ENCODE measurements at regions of chr2 and their contacts with region 1.

Region 1: DNA sequence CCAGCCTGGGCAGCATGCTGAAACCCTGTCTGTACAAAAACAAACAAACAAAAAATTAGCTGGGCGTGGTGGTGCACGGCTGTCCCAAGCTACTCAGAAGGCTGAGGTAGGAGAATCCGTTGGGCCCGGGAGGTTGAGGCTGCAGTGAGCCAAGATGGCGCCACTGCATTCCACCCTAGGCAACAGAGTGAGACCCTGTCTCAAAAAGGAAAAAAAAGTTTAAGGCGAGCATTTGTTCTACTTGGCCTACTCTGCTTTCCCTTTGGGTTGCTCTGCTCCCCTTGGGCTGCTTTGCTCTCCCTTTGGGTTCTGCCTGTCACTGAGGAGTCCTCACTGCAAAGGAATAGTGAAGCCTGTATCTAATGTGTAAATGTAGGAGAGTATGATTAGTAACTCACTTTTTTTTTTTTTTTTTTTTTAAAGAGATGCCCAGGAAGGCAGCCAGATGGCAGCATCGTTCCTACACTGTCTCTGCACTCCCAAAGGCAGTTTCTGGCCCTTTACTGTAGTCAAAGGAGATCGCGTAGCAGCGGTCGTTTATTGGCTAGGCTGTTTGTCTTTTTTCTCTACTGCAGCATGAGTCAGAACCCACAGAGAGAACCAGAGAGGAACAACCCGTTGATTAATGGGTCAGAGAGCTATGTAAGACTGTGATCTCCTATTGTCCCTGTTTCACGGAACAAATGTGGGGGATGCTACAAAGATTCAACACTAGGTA is 118.3 kb upstream of the CWC22 start:
- DNase-seq: peak; percentile 67
- ATAC-seq: peak; percentile 94
- H3K4me3 ChIP-seq: peak overlapping the region in 1 of 2 experiments; percentile 23; a peak in 1 of 4 replicates
- H3K27ac ChIP-seq: peak overlapping the region; percentile 61; the same call in 1 of the 2 replicates
- H3K4me1 ChIP-seq: peaks cover 11% of the 10 kb centered on the region
- H3K27me3 ChIP-seq: no peaks in the 10 kb centered on the region
- CTCF ChIP-seq: peak; percentile 82

Region 2: DNA sequence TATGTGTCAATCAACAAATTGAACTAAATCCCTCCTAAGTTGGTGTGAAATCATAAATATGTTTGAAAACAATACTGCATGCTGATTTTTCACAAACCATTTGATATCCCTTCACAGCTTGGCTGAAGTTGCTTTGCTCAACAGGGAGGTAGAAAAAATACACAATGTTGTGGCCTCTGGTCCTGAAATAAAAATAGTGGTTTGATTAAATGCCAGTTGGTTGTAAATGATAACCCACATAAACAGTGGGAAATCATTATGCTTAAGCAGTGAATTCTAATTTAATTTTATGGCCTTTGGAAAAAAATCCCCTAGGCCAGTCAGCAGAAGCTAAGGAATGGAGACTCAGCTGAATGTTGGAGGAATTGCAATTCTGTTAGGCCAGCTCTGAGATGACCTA is 241.1 kb after region 1 on chr2:
- CTCF ChIA-PET with region 1: interaction called, 10 read pairs
- POLR2A ChIA-PET with region 1: no interaction called
- in situ Hi-C with region 1: no loop called
- intact Hi-C with region 1: no loop called
- DNase-seq: no peak
- ATAC-seq: no peak
- H3K4me3 ChIP-seq: no peak overlapping the region
- H3K27ac ChIP-seq: no peak overlapping the region
- H3K4me1 ChIP-seq: no peaks in the 10 kb centered on the region; the same call in 1 of the 2 replicates
- H3K27me3 ChIP-seq: no peaks in the 10 kb centered on the region
- CTCF ChIP-seq: no peak

Region 3: DNA sequence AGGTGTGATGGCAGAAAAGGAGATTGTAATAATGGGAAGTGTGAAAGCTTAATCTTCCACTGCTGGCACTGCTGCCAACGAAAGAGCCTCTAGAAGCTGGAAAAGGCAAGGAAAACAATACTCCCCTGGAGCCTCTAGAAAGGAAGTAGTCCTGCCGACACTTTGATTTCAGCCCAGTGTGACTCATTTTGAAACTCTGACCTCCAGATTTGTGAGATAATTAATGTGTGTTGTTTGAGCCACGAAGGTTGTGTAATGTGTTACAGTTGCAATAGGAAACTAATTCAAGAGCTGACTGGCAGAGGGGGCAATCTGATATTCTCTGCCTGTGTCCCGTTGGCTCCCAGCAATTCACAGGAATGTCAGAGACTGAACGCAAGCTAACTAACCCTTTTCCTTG is 635.8 kb after region 1 on chr2:
- CTCF ChIA-PET with region 1: no interaction called
- POLR2A ChIA-PET with region 1: no interaction called
- in situ Hi-C with region 1: no loop called
- intact Hi-C with region 1: no loop called
- DNase-seq: no peak
- ATAC-seq: peak; percentile 72
- H3K4me3 ChIP-seq: no peak overlapping the region
- H3K27ac ChIP-seq: no peak overlapping the region; the same call in 1 of the 2 replicates
- H3K4me1 ChIP-seq: no peaks in the 10 kb centered on the region; the same call in 1 of the 2 replicates
- H3K27me3 ChIP-seq: no peaks in the 10 kb centered on the region
- CTCF ChIP-seq: no peak

Region 4: DNA sequence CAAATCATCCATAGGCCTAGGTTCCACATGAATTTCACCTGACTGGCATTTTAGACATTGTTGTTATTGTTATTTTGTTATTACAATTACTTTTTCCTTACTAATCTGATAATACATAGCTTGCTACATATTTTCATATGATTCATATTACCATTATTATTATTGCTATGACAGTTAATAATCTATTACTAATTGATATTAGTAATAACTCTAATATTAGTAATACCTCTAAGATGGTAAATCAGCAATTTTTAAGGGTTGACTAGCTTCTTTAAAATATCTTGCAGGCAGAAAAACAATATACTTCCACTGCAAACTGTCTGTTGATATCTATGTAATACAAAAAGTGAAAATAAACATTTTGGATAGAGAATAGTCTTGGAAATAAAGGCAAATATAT is 806.4 kb after region 1 on chr2:
- CTCF ChIA-PET with region 1: interaction called, 11 read pairs
- POLR2A ChIA-PET with region 1: no interaction called
- in situ Hi-C with region 1: no loop called
- intact Hi-C with region 1: no loop called
- DNase-seq: no peak
- ATAC-seq: no peak
- H3K4me3 ChIP-seq: no peak overlapping the region
- H3K27ac ChIP-seq: no peak overlapping the region
- H3K4me1 ChIP-seq: no peaks in the 10 kb centered on the region
- H3K27me3 ChIP-seq: no peaks in the 10 kb centered on the region
- CTCF ChIP-seq: no peak

Region 5: GRCh38 chr2:180980106-180980942 is 854.9 kb after region 1 on chr2 and contains the start of gene UBE2E3:
- CTCF ChIA-PET with region 1: no interaction called
- POLR2A ChIA-PET with region 1: no interaction called
- in situ Hi-C with region 1: no loop called
- intact Hi-C with region 1: loop called (anchors 2 kb)
- DNase-seq: no peak
- ATAC-seq: peak; percentile 94
- H3K4me3 ChIP-seq: peak within 1 kb of the TSS; percentile 96 to 97
- H3K27ac ChIP-seq: peak within 1 kb of the TSS; percentile 97
- H3K4me1 ChIP-seq: peaks cover 31% of the 10 kb centered on the region
- H3K27me3 ChIP-seq: no peaks in the 10 kb centered on the region
- CTCF ChIP-seq: peak; percentile 89
- total RNA-seq, gene UBE2E3: 91.3 TPM

Region 6: GRCh38 chr2:181058378-181059269 is 933.2 kb after region 1 on chr2:
- CTCF ChIA-PET with region 1: interaction called, 3 read pairs
- POLR2A ChIA-PET with region 1: no interaction called
- in situ Hi-C with region 1: no loop called
- intact Hi-C with region 1: loop called (anchors 5 kb)
- DNase-seq: no peak
- ATAC-seq: peak; percentile 62; the same call in 1 of the 2 replicates
- H3K4me3 ChIP-seq: no peak overlapping the region
- H3K27ac ChIP-seq: no peak overlapping the region
- H3K4me1 ChIP-seq: no peaks in the 10 kb centered on the region
- H3K27me3 ChIP-seq: no peaks in the 10 kb centered on the region
- CTCF ChIP-seq: peak; percentile 74; the same call in 1 of the 2 replicates

Region 7: GRCh38 chr2:181466661-181467576 is 1341.5 kb after region 1 on chr2:
- CTCF ChIA-PET with region 1: no interaction called
- POLR2A ChIA-PET with region 1: no interaction called
- in situ Hi-C with region 1: no loop called
- intact Hi-C with region 1: loop called (anchors 10 kb)
- DNase-seq: peak; percentile 10
- ATAC-seq: no peak
- H3K4me3 ChIP-seq: no peak overlapping the region
- H3K27ac ChIP-seq: no peak overlapping the region
- H3K4me1 ChIP-seq: no peaks in the 10 kb centered on the region
- H3K27me3 ChIP-seq: no peaks in the 10 kb centered on the region
- CTCF ChIP-seq: peak; percentile 92

Region 8: DNA sequence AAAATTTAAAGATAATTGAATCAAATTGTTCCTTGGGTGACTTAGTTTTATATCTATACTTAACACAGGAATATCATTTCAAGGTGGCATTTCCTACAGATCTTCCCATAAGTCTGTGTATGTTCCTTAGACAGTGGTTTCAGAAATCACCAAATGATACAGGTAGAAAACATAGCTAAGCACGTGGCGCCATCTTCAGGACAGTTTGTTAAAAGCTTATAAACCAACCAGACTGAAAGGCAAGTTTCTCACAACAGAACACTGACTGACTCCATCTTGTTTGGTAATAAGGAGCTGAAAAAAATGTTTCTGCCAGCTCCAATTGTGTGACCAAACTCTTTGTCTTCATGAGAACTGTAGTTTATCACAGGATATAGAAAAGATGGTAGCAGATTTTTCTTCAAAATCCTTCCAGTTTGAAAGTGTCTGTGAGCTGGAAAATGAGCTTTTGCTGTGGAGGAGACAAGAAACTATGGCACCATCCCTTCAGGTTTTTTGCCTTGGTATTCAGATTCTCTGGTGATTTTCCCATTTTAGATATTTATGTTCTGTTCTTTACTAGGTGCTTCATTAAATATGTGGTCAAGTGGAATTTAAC is 1589.7 kb after region 1 on chr2:
- CTCF ChIA-PET with region 1: interaction called, 3 read pairs
- POLR2A ChIA-PET with region 1: no interaction called
- in situ Hi-C with region 1: no loop called
- intact Hi-C with region 1: loop called (anchors 1 kb)
- DNase-seq: peak; percentile 78
- ATAC-seq: peak; percentile 92
- H3K4me3 ChIP-seq: no peak overlapping the region
- H3K27ac ChIP-seq: no peak overlapping the region; the same call in 1 of the 2 replicates
- H3K4me1 ChIP-seq: no peaks in the 10 kb centered on the region
- H3K27me3 ChIP-seq: no peaks in the 10 kb centered on the region
- CTCF ChIP-seq: peak; percentile 67; the same call in 1 of the 2 replicates

Measured in Panc1 (cell line).